ENCODE measurements at regions of chr15 and their contacts with region 1.

Region 1: GRCh38 chr15:55289721-55290527 is at the start of gene RAB27A:
- DNase-seq: peak in 41 of 42 donors; percentile 18 to 84 (median 52)

Region 2: DNA sequence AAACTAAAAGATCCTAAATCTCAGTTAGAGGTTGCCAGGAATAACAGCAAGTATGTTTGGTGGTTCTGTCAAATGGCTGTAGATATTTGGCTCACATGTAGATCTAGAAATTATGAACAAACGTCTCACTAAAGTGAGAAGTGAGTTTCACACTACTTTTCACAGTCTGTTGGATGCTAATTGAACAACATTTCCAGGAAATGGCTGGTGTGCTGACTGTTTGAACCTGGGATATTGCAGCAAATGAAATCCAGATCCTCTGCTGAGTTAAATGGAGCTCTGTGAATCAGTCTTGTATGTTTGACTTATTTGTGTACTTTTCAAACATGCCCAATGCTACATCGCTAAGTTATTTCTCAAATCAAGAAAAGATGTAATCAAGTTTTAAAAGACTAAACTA is 71.9 kb before region 1 on chr15:
- intact Hi-C with region 1: loop called (anchors 2 kb)
- DNase-seq: no peak

Region 3: GRCh38 chr15:56693761-56694160 is 1403.8 kb after region 1 on chr15:
- intact Hi-C with region 1: no loop called
- DNase-seq: no peak

Measured in head of caudate nucleus (tissue), 42 donors.